ENCODE measurements at regions of chr9 and their contacts with region 1.

Region 1: GRCh38 chr9:21110708-21111576 is 30.7 kb downstream of the IFNW1 start:
- DNase-seq: no peak
- H3K4me3 ChIP-seq: no peak overlapping the region
- H3K27ac ChIP-seq: no peak overlapping the region
- H3K4me1 ChIP-seq: no peaks in the 10 kb centered on the region
- H3K27me3 ChIP-seq: no peaks in the 10 kb centered on the region
- CTCF ChIP-seq: peak; percentile 47 to 87 (median 78)
- POLR2A ChIP-seq: no peak

Region 2: GRCh38 chr9:19925817-19926503 is 1185.0 kb before region 1 on chr9:
- intact Hi-C with region 1: loop called (anchors 5 kb)
- DNase-seq: peak; percentile 85
- H3K4me3 ChIP-seq: peak overlapping the region in 2 of 8 donors; percentile 12 to 56
- H3K27ac ChIP-seq: no peak overlapping the region
- H3K4me1 ChIP-seq: peaks cover 3 to 14% (median 10%) of the 10 kb centered on the region in 6 donors
- H3K27me3 ChIP-seq: peaks cover 0 to 20% (median 0%) of the 10 kb centered on the region in 7 donors
- CTCF ChIP-seq: peak; percentile 86 to 95 (median 93)
- POLR2A ChIP-seq: no peak

Region 3: DNA sequence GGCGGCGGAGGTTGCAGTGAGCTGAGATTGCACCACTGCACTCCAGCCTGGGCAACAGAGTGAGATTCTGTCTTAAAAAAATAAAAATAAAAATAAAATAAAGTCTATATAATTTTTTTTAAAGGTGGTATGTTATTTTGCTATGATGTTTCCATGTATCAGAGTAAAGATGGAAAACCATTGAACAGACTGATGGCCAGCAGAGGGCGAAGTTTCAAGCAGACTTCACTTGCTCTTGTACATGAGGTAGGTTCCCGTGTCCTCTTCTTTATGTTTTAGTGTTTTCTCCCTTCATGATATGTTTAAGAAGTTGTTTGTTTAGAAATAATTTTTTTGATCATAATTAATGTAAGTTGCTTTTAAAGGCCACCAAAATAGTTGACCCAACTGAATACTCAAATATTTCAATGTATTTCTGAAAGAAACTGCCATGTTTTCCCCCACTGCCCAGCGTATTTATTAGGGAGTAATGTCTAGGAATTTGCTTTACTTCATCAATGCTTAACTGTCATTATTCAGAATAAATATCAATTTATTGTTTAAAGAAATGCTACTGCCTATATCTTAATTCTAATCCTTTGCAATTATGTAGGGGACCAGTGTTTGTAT is 225.9 kb before region 1 on chr9:
- intact Hi-C with region 1: loop called (anchors 5 kb)
- DNase-seq: peak; percentile 80
- H3K4me3 ChIP-seq: no peak overlapping the region
- H3K27ac ChIP-seq: no peak overlapping the region
- H3K4me1 ChIP-seq: no peaks in the 10 kb centered on the region
- H3K27me3 ChIP-seq: no peaks in the 10 kb centered on the region
- CTCF ChIP-seq: peak in 9 of 11 experiments; percentile 34 to 69 (median 54)
- POLR2A ChIP-seq: no peak

Region 4: DNA sequence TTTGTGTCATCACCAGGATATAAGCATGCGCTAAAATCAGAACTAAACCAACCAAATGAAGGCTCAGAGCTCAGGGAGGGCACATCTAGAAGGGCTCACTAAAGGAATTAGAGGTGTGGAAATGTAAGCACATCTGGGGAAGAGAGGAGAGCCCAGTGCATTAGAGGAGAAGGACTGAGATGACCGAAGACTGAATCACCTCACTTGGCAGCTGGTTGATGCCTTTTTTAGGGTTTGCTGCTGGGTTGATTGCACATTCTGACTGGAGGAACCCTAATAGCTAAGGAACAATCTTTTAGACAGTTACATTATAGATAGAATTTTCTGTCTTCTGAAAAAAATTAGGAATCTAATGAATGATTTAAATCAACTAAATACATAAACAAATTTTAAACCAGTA is 63.7 kb after region 1 on chr9:
- intact Hi-C with region 1: no loop called
- DNase-seq: no peak
- H3K4me3 ChIP-seq: no peak overlapping the region
- H3K27ac ChIP-seq: no peak overlapping the region
- H3K4me1 ChIP-seq: no peaks in the 10 kb centered on the region
- H3K27me3 ChIP-seq: no peaks in the 10 kb centered on the region
- CTCF ChIP-seq: no peak
- POLR2A ChIP-seq: no peak

Measured in spleen (tissue), 13 donors.